Aorta (tissue), 5 donors: ENCODE measurements at regions of chr11 and their contacts with region 1.

Region 1: DNA sequence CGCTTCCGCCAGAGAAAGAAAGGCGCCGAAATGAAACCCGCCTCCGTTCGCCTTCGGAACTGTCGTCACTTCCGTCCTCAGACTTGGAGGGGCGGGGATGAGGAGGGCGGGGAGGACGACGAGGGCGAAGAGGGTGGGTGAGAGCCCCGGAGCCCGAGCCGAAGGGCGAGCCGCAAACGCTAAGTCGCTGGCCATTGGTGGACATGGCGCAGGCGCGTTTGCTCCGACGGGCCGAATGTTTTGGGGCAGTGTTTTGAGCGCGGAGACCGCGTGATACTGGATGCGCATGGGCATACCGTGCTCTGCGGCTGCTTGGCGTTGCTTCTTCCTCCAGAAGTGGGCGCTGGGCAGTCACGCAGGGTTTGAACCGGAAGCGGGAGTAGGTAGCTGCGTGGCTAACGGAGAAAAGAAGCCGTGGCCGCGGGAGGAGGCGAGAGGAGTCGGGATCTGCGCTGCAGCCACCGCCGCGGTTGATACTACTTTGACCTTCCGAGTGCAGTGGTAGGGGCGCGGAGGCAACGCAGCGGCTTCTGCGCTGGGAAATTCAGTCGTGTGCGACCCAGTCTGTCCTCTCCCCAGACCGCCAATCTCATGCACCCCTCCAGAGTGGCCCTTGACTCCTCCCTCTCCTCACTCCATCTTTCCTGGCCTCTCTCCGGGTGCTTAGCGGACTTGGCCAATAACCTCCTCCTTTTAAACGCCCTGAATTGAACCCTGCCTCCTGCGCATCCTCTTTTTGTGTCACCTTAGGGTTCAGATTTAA is at the start of gene ATM:
- DNase-seq: peak; percentile 100
- ATAC-seq: peak; percentile 99
- H3K4me3 ChIP-seq: peak within 1 kb of the TSS; percentile 77 to 94
- H3K27ac ChIP-seq: peak within 1 kb of the TSS; percentile 67 to 95
- H3K4me1 ChIP-seq: peaks cover 2 to 13% of the 10 kb centered on the region in 2 donors
- H3K27me3 ChIP-seq: no peaks in the 10 kb centered on the region
- total RNA-seq, gene ATM: 66.3 to 123 TPM

Region 2: GRCh38 chr11:108008656-108009496 is 214.0 kb before region 1 on chr11 and contains the start of gene CUL5:
- intact Hi-C with region 1: loop called in 1 of 2 experiments (anchors 5 kb)
- DNase-seq: peak; percentile 97 to 99
- ATAC-seq: peak; percentile 99
- H3K4me3 ChIP-seq: peak within 1 kb of the TSS; percentile 58 to 77
- H3K27ac ChIP-seq: peak within 1 kb of the TSS; percentile 92 to 94
- H3K4me1 ChIP-seq: no peaks in the 10 kb centered on the region
- H3K27me3 ChIP-seq: no peaks in the 10 kb centered on the region
- total RNA-seq, gene CUL5: 33.7 to 34.3 TPM

Region 3: GRCh38 chr11:108121274-108122155 is 101.4 kb before region 1 on chr11 and contains the start of gene ACAT1:
- intact Hi-C with region 1: loop called in 1 of 2 experiments (anchors 2 kb)
- DNase-seq: peak; percentile 98 to 100
- ATAC-seq: peak; percentile 98
- H3K4me3 ChIP-seq: peak within 1 kb of the TSS; percentile 73 to 78
- H3K27ac ChIP-seq: peak within 1 kb of the TSS; percentile 77 to 88
- H3K4me1 ChIP-seq: no peaks in the 10 kb centered on the region
- H3K27me3 ChIP-seq: no peaks in the 10 kb centered on the region
- total RNA-seq, gene ACAT1: 65.8 to 70.5 TPM

Region 4: GRCh38 chr11:108664730-108665525 is 442.1 kb after region 1 on chr11 and contains the start of gene DDX10:
- intact Hi-C with region 1: loop called (anchors 2 to 5 kb)
- DNase-seq: peak; percentile 98 to 99
- ATAC-seq: peak; percentile 99
- H3K4me3 ChIP-seq: peak within 1 kb of the TSS; percentile 66 to 86
- H3K27ac ChIP-seq: no peak within 1 kb of the TSS
- H3K4me1 ChIP-seq: peaks cover 0 to 10% of the 10 kb centered on the region in 2 donors
- H3K27me3 ChIP-seq: no peaks in the 10 kb centered on the region
- total RNA-seq, gene DDX10: 18.8 to 24.2 TPM